GM12878 (cell line): ENCODE measurements at regions of chr6 and their contacts with region 1.

Region 1: DNA sequence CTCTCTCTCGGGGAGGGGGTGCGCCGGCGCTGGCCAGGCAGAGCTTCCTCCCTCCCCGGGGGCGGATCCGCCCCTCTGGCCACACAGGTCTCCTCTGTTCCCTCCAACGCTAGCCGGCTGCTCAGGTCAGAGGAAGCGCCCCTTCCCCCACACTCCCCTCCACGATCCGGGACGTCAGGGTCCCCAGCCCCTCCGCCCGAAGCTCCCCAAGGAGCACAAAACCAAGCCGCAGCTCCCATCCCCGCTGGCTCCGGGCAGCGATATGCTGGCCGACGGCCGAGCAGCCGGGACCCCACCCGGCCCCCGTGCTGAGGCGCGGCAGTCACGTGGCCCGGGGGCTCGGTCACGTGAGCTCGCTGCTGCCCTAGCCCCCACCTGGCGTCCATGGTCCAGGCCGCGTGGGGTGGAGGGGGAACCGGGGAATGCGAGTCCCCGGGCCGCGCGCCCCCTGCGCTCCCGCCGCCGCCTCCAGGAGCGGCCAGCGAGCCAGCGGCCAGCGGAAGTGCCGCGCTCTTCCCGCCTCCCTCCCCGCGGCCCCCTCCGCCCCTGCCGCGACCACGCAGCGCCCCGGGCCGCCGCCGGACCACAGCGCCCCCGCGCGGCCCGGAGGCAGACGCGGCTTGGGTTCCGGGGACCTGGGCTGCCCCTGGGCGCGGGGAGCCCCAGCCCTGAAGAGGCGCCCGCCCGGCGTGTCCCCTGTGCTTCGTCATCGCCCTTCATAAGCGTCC is at the start of gene SLC35B2:
- DNase-seq: no peak
- ATAC-seq: peak; percentile 54
- H3K4me3 ChIP-seq: peak within 1 kb of the TSS; percentile 77
- H3K27ac ChIP-seq: peak within 1 kb of the TSS; percentile 99
- H3K4me1 ChIP-seq: peaks cover 61% of the 10 kb centered on the region
- H3K27me3 ChIP-seq: no peaks in the 10 kb centered on the region
- CTCF ChIP-seq: peak; percentile 53 to 69 (median 54); a peak in 5 of 6 replicates
- EP300 ChIP-seq: no peak
- POLR2A ChIP-seq: no peak
- RAD21 ChIP-seq: peak; percentile 49
- polyA plus RNA-seq, gene SLC35B2: 11.3 to 14.9 TPM

Region 2: GRCh38 chr6:43129434-43130194 is 1127.6 kb before region 1 on chr6:
- CTCF ChIA-PET with region 1: no interaction called
- POLR2A ChIA-PET with region 1: no interaction called
- RAD21 ChIA-PET with region 1: no interaction called
- SMC1A ChIA-PET with region 1: no interaction called
- in situ Hi-C with region 1: no loop called
- intact Hi-C with region 1: no loop called
- DNase-seq: no peak
- ATAC-seq: peak; percentile 91
- H3K4me3 ChIP-seq: no peak overlapping the region
- H3K27ac ChIP-seq: no peak overlapping the region
- H3K4me1 ChIP-seq: no peaks in the 10 kb centered on the region
- H3K27me3 ChIP-seq: peaks cover 0 to 1% of the 10 kb centered on the region in 2 experiments; a peak in 1 of 4 replicates
- CTCF ChIP-seq: peak; percentile 54 to 70 (median 64); a peak in 5 of 6 replicates
- EP300 ChIP-seq: no peak
- POLR2A ChIP-seq: no peak
- RAD21 ChIP-seq: peak; percentile 82

Region 3: DNA sequence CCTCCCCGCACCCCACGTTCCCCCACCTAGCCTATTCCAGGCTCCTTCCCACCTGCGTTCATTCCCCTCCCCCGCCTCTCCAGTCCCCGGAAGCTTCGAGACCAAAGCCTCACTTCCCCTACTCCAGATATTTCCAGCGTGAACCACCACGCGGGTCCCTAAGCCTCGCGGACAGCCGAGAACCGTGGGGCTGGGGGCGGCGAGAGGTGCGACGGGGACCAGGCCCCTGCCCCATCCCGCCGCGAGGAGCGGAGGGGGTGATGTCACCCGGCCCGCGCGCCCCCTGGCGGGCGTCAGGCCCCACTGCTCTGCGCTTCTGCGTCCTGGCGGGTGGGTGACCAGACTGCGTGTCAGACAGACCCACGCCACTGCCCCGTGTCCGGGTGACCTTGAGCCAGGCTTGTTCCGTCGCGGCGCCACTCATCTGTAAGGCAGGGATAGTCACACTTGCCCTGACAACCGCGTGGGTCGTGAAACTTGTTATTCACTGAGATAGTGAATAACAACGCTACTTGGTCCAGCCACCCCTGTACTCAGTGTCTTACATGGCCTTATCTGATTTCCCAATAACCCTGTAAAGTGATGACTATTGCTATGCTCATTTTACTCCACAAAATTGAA is 19.3 kb before region 1 on chr6:
- CTCF ChIA-PET with region 1: interaction called, 12 read pairs
- POLR2A ChIA-PET with region 1: interaction called, 5 read pairs
- RAD21 ChIA-PET with region 1: interaction called, 3 read pairs
- SMC1A ChIA-PET with region 1: interaction called, 7 read pairs
- in situ Hi-C with region 1: no loop called
- intact Hi-C with region 1: no loop called
- DNase-seq: no peak
- ATAC-seq: peak; percentile 97
- H3K4me3 ChIP-seq: peak overlapping the region; percentile 54; the same call in 1 of the 2 replicates
- H3K27ac ChIP-seq: peak overlapping the region; percentile 71
- H3K4me1 ChIP-seq: peaks cover 8% of the 10 kb centered on the region
- H3K27me3 ChIP-seq: no peaks in the 10 kb centered on the region
- CTCF ChIP-seq: peak; percentile 91 to 95 (median 94)
- EP300 ChIP-seq: no peak
- POLR2A ChIP-seq: peak; percentile 83
- RAD21 ChIP-seq: peak; percentile 53

Region 4: GRCh38 chr6:44246663-44247337 is 10.4 kb before region 1 on chr6 and contains the start of gene HSP90AB1:
- CTCF ChIA-PET with region 1: interaction called, 30 read pairs
- POLR2A ChIA-PET with region 1: interaction called, 131 read pairs
- RAD21 ChIA-PET with region 1: interaction called, 28 read pairs
- SMC1A ChIA-PET with region 1: interaction called, 25 read pairs
- in situ Hi-C with region 1: no loop called
- intact Hi-C with region 1: no loop called
- DNase-seq: peak; percentile 96
- ATAC-seq: peak; percentile 84
- H3K4me3 ChIP-seq: peak within 1 kb of the TSS; percentile 95
- H3K27ac ChIP-seq: peak within 1 kb of the TSS; percentile 96
- H3K4me1 ChIP-seq: peaks cover 7% of the 10 kb centered on the region; the same call in 1 of the 2 replicates
- H3K27me3 ChIP-seq: no peaks in the 10 kb centered on the region
- CTCF ChIP-seq: no peak
- EP300 ChIP-seq: peak; percentile 24 to 57; a peak in 1 of 4 replicates
- POLR2A ChIP-seq: peak; percentile 99
- RAD21 ChIP-seq: no peak
- polyA plus RNA-seq, gene HSP90AB1: 1,089 to 1,682 TPM

Region 5: GRCh38 chr6:44285552-44286284 is 28.5 kb after region 1 on chr6:
- CTCF ChIA-PET with region 1: no interaction called
- POLR2A ChIA-PET with region 1: no interaction called
- RAD21 ChIA-PET with region 1: no interaction called
- SMC1A ChIA-PET with region 1: no interaction called
- in situ Hi-C with region 1: no loop called
- intact Hi-C with region 1: no loop called
- DNase-seq: no peak
- ATAC-seq: no peak
- H3K4me3 ChIP-seq: no peak overlapping the region
- H3K27ac ChIP-seq: no peak overlapping the region
- H3K4me1 ChIP-seq: no peaks in the 10 kb centered on the region
- H3K27me3 ChIP-seq: peaks cover 0 to 3% of the 10 kb centered on the region in 2 experiments; a peak in 2 of 4 replicates
- CTCF ChIP-seq: no peak
- EP300 ChIP-seq: no peak
- POLR2A ChIP-seq: no peak
- RAD21 ChIP-seq: no peak